ENCODE measurements at regions of chr10 and their contacts with region 1.

Region 1: DNA sequence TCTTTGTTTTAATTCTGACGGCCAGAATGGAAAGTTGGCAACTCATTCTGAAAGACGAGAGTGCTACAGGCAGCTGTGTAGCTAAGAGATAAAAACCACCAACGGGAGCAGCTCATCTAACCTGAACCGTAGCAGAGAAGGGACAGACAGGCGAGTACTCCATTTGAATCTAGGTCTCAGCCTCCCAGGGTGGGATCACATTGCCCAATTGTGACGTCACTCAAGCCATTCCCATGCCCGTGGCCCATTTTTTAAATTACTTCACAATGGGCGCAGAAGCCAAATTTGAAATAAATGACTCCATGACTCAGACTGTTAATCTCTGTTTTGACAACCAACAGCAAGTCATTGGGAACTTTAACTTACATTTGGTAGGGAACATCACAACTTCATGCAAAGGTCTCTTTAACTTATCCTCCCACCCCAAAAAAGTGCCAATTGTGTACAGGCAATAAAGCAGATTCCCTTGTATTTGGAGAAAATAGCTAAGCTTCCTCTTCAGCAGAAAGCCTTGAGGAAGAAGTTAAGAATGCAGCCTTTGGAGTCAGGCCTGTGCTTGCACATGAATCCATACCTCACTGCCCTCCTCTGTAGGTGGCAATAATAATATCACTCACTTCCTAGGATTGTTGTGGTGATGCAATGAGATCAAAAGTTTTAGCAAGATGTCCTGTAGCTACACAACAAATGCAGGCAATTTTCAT is 93.2 kb upstream of the KIF5B start:
- DNase-seq: peak; percentile 89
- H3K4me3 ChIP-seq: no peak overlapping the region
- H3K27ac ChIP-seq: peak overlapping the region; percentile 98
- H3K4me1 ChIP-seq: peaks cover 25% of the 10 kb centered on the region
- H3K27me3 ChIP-seq: no peaks in the 10 kb centered on the region
- CTCF ChIP-seq: peak; percentile 5 to 19

Region 2: DNA sequence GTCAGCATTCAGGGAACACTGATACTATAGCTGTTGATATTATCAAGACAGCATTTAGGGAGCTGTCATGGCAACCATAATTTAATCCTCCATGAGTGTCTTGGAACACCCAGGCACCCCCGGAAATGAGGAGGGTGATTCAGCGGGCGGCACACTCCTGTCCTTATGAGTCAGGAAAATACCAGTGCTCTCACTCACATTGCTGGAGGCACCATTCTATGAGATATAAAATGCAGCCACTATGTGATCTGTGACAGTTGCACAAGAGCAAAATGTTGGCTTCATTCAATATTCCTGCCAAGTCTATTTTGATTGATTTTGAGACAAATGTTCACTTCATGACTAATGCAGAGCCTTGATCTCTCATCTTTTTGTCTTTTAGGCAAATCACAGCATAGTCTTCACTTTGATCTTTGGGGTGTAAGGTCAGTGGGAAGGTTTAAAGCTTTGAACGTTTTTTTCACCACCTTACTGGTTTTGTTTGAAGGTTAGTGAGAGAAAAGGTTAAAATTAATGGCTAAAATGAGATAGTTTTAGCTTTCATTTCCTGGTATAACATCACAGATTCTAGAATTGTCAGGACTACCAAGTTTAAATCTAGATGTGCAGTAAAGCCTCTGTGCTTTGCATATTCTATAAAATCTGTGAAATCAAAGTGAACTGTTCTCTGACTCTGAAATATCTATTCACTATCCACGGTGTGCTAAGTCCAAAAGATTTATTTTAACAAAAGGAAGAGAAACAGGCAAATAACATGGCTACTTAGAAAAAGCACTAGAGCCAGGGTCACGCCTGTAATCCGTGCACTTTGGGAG is 208.4 kb before region 1 on chr10:
- CTCF ChIA-PET with region 1: no interaction called
- dilution Hi-C with region 1: no loop called
- in situ Hi-C with region 1: no loop called
- intact Hi-C with region 1: loop called (anchors 2 kb)
- DNase-seq: peak; percentile 98
- H3K4me3 ChIP-seq: peak overlapping the region in 1 of 3 experiments; percentile 9
- H3K27ac ChIP-seq: peak overlapping the region; percentile 99
- H3K4me1 ChIP-seq: peaks cover 50% of the 10 kb centered on the region
- H3K27me3 ChIP-seq: no peaks in the 10 kb centered on the region
- CTCF ChIP-seq: no peak

Region 3: DNA sequence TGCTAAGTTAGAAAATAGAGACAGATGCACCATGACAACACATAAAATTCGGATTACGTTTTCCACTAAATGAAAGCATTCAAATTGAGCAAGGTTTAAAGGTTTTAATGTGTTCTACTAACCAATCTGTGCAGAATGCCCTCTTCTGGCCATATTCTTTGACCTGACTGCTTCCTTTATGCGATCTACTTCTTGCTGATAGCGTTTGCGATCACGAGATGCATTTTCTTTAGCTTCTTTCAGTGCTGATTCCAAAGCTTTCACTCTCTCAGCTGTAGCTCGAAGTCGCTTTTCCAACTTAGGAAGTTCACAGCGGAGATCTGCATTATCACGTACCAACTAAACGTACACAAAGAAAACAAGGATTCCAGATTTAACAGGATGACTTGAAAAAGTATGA is 132.4 kb before region 1 on chr10:
- CTCF ChIA-PET with region 1: no interaction called
- dilution Hi-C with region 1: loop called (anchors 10 kb)
- in situ Hi-C with region 1: no loop called
- intact Hi-C with region 1: no loop called
- DNase-seq: no peak
- H3K4me3 ChIP-seq: no peak overlapping the region
- H3K27ac ChIP-seq: no peak overlapping the region
- H3K4me1 ChIP-seq: no peaks in the 10 kb centered on the region
- H3K27me3 ChIP-seq: no peaks in the 10 kb centered on the region
- CTCF ChIP-seq: no peak

Region 4: GRCh38 chr10:32190890-32191491 is 41.6 kb after region 1 on chr10:
- CTCF ChIA-PET with region 1: interaction called, 3 read pairs
- dilution Hi-C with region 1: no loop called
- in situ Hi-C with region 1: no loop called
- intact Hi-C with region 1: loop called (anchors 2 kb)
- DNase-seq: peak; percentile 27
- H3K4me3 ChIP-seq: no peak overlapping the region
- H3K27ac ChIP-seq: no peak overlapping the region
- H3K4me1 ChIP-seq: no peaks in the 10 kb centered on the region
- H3K27me3 ChIP-seq: no peaks in the 10 kb centered on the region
- CTCF ChIP-seq: peak; percentile 65 to 66